Sigmoid colon (tissue), 7 donors: ENCODE measurements at regions of chr15 and their contacts with region 1.

Region 1: DNA sequence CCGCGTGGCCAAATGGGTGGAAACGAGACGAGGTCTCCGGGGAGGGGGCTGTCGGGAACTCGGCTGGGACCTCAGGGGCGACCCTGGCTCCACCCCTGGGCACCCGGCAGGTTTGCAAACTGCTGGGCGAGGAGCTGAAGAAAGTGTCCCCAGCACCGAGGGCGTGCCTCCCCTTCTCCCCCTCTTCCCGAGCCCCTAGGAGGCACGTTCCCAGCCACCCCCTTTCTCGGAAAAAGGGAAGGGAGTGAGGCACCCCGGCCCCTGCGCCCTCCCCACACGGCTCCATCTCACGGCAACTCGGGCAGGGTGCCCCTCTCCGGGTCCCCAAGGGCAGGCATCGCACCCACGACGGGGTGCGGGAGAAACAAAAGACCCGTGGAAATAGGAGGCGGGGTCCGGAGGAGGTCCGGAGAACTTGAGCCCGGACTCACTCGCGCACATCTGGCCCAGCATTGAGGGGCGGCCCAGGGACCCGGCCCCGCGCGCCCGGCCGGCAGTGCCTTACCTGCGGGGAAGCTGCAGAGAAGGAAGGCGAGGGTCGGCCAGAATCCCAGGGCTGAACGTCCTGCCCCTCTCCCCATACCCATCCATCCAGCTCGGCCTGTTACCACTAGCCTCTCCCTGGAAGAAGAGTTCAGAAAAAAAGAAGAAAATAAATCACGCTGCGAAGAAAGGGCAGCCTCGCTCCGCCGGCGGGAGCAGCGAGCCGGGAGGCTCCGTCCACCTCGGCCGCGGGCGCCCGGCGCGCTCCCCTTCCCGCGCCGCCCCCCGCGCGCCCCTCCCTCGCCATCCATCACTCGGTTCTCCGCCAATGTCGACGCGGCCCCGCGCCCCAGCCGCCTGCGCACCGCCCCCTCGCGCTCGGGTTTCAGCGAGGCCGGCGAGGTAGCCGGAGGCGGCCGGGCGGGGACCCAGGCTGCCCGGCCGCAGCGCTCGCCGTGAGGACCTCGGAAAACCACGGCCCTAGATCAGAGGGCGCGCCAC is 16.3 kb downstream of the RGMA start:
- DNase-seq: peak; percentile 94
- H3K4me3 ChIP-seq: peak overlapping the region; percentile 85 to 99 (median 88)
- H3K27ac ChIP-seq: peak overlapping the region; percentile 96 to 98 (median 97)
- H3K4me1 ChIP-seq: peaks cover 0 to 77% (median 59%) of the 10 kb centered on the region in 4 donors
- H3K27me3 ChIP-seq: no peaks in the 10 kb centered on the region
- CTCF ChIP-seq: no peak
- EP300 ChIP-seq: no peak
- POLR2A ChIP-seq: peak; percentile 33 to 41

Region 2: GRCh38 chr15:92903941-92904831 is 168.5 kb before region 1 on chr15:
- intact Hi-C with region 1: loop called (anchors 5 kb)
- DNase-seq: peak; percentile 100
- H3K4me3 ChIP-seq: peak overlapping the region; percentile 42 to 60 (median 57)
- H3K27ac ChIP-seq: peak overlapping the region; percentile 91 to 96 (median 94)
- H3K4me1 ChIP-seq: peaks cover 0 to 71% (median 48%) of the 10 kb centered on the region in 4 donors
- H3K27me3 ChIP-seq: no peaks in the 10 kb centered on the region
- CTCF ChIP-seq: no peak
- EP300 ChIP-seq: peak; percentile 82 to 98 (median 91)
- POLR2A ChIP-seq: peak; percentile 90 to 95